H1 (cell line): ENCODE measurements at regions of chr3 and their contacts with region 1.

Region 1: GRCh38 chr3:156449712-156450574 is 105.0 kb downstream of the SSR3 start:
- DNase-seq: no peak
- H3K4me3 ChIP-seq: no peak overlapping the region
- H3K27ac ChIP-seq: no peak overlapping the region
- H3K4me1 ChIP-seq: no peaks in the 10 kb centered on the region
- H3K27me3 ChIP-seq: no peaks in the 10 kb centered on the region
- CTCF ChIP-seq: peak in 2 of 3 experiments; percentile 62 to 75; a peak in 3 of 4 replicates
- EP300 ChIP-seq: no peak
- POLR2A ChIP-seq: no peak
- RAD21 ChIP-seq: peak; percentile 47 to 60

Region 2: DNA sequence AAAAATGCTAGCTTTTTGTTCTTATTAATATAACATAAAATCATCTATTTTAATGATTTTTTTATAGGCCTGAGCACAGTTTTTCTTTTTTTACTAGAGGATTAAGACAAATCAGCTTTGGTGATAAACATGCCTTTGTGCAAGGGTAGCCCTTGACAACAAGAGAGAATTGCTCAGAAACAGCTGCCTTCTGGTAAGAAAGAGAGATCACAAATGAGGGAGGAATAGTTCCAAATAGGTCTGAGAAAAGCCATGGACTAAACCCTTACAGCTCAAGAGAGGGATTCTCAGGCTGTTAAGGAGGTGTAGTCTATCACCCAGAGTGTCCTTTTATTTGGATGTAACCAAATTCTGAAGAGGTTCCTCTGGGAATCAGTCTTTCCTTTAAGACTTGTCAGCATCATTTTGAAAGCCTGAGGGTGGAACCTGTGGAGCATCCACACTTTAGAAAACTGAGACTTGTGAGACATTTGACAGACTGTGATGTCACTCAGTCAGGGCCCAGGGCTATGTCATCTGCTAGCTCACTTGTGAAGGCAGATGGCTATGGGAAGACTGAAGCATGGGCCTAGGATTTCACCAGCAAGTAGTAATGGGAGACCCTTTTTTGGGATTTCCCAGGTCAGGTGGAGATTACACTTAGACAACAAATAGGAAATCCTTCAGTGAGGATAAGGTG is 432.5 kb before region 1 on chr3:
- CTCF ChIA-PET with region 1: interaction called, 12 read pairs
- POLR2A ChIA-PET with region 1: no interaction called
- DNase-seq: no peak
- H3K4me3 ChIP-seq: no peak overlapping the region
- H3K27ac ChIP-seq: no peak overlapping the region
- H3K4me1 ChIP-seq: peaks cover 0 to 9% (median 0%) of the 10 kb centered on the region in 4 experiments; a peak in 1 of 7 replicates
- H3K27me3 ChIP-seq: no peaks in the 10 kb centered on the region
- CTCF ChIP-seq: no peak
- EP300 ChIP-seq: no peak
- POLR2A ChIP-seq: no peak
- RAD21 ChIP-seq: no peak

Region 3: DNA sequence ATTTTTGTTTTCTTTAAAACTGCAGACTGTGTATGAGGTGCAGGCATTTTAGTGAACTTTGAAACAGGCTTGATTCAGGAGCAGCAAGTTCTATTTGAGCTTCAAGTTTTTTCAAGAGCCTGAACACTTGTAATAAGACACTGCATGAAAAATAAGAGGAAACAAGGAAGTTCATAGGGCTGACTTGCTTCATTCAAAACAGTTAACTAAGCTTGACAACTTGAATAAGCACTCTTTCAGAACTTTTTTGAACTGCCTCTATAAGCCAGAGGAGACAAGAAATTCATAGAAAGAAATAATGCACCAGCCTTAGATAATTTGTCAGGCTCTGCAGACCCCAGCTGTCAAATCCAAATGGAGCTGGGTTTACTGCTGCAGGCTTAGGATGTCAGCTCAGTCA is 25.2 kb before region 1 on chr3:
- CTCF ChIA-PET with region 1: interaction called, 16 read pairs
- POLR2A ChIA-PET with region 1: no interaction called
- DNase-seq: no peak
- H3K4me3 ChIP-seq: no peak overlapping the region
- H3K27ac ChIP-seq: no peak overlapping the region
- H3K4me1 ChIP-seq: no peaks in the 10 kb centered on the region
- H3K27me3 ChIP-seq: no peaks in the 10 kb centered on the region
- CTCF ChIP-seq: no peak
- EP300 ChIP-seq: no peak
- POLR2A ChIP-seq: no peak
- RAD21 ChIP-seq: no peak

Region 4: GRCh38 chr3:156460206-156460611 is 10.3 kb after region 1 on chr3:
- CTCF ChIA-PET with region 1: interaction called, 228 read pairs
- POLR2A ChIA-PET with region 1: interaction called, 3 read pairs
- DNase-seq: no peak
- H3K4me3 ChIP-seq: no peak overlapping the region
- H3K27ac ChIP-seq: no peak overlapping the region
- H3K4me1 ChIP-seq: peaks cover 5 to 17% (median 13%) of the 10 kb centered on the region in 4 experiments; a peak in 5 of 7 replicates
- H3K27me3 ChIP-seq: no peaks in the 10 kb centered on the region
- CTCF ChIP-seq: no peak
- EP300 ChIP-seq: no peak
- POLR2A ChIP-seq: no peak
- RAD21 ChIP-seq: no peak

Region 5: DNA sequence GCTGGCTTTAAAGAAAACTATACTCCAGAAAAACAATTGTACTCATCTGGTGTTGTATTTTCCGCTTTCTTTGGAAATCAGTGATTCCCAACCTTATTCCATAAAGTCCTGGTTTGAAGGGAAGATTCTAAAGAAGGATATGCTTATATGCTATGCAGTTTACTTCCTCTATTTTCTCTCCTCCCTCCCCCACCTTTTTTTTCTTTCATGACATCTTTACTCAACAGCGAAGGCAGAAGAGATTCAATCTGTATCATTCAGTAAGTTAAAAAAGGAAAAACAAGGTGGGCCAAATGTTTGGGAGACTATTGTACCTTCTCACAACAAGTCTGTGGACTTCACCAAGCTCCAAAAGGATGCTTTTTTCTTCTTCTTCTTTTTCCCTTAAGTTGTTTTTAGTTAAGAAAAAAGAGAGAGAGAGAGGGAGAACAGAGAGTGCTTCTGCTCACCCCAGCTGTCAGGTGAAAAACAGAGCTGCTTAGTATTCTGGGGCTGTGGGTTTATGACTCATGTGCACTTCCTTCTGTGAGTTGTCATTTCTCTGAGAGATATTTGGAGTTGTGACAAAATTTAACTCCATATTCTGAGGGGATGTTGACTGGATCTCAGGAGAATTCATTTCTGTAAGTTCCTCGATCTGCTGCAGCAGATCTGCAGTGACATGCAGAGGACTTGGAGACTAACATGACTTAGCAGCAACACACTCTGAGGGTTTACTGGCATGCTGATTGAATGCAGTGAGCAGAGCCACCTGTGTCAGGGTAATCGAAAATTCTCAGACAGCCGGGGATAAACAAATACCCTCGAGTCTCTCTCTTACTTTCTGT is 34.2 kb after region 1 on chr3:
- CTCF ChIA-PET with region 1: interaction called, 20 read pairs
- POLR2A ChIA-PET with region 1: no interaction called
- DNase-seq: no peak
- H3K4me3 ChIP-seq: no peak overlapping the region
- H3K27ac ChIP-seq: no peak overlapping the region
- H3K4me1 ChIP-seq: peaks cover 0 to 3% (median 0%) of the 10 kb centered on the region in 4 experiments; a peak in 1 of 7 replicates
- H3K27me3 ChIP-seq: no peaks in the 10 kb centered on the region
- CTCF ChIP-seq: no peak
- EP300 ChIP-seq: no peak
- POLR2A ChIP-seq: no peak
- RAD21 ChIP-seq: no peak